A673 (cell line): ENCODE measurements at regions of chr4 and their contacts with region 1.

Region 1: DNA sequence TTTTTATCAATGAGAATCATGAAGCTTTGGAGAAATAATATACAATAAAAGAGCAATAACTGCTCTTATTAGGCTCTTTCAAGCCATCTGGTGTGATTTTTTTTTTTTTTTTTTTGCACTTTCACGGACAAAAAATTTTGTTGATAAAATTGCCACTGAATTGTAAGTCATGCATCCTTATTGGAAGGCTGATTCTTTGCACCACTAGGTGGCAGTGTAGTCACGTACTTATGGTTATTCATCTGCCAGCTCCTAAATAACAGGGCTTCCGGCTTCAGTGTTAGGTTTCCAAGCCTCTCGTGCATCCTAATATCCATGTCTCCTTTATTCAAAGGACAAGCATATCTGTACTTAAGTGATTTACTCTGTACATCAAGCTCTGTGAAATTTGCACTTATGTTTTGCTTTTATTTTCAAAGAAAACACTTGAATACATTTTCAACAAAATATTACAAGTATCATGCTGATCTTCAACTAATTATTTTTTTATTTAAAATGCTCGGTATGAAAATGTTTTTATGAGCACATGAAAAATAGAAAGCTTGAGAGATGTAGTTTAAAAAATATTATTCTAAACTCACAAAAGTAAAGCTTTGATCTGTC is 1578.3 kb upstream of the TENM3 start:
- DNase-seq: peak; percentile 95
- H3K4me3 ChIP-seq: no peak overlapping the region
- H3K27ac ChIP-seq: peak overlapping the region; percentile 39
- H3K4me1 ChIP-seq: peaks cover 28% of the 10 kb centered on the region
- H3K27me3 ChIP-seq: no peaks in the 10 kb centered on the region
- CTCF ChIP-seq: peak; percentile 84

Region 2: GRCh38 chr4:179867300-179867878 is 797.5 kb before region 1 on chr4:
- CTCF ChIA-PET with region 1: no interaction called
- POLR2A ChIA-PET with region 1: no interaction called
- intact Hi-C with region 1: loop called (anchors 2 kb)
- DNase-seq: peak; percentile 84
- H3K4me3 ChIP-seq: no peak overlapping the region
- H3K27ac ChIP-seq: no peak overlapping the region
- H3K4me1 ChIP-seq: no peaks in the 10 kb centered on the region
- H3K27me3 ChIP-seq: no peaks in the 10 kb centered on the region
- CTCF ChIP-seq: peak; percentile 94

Region 3: DNA sequence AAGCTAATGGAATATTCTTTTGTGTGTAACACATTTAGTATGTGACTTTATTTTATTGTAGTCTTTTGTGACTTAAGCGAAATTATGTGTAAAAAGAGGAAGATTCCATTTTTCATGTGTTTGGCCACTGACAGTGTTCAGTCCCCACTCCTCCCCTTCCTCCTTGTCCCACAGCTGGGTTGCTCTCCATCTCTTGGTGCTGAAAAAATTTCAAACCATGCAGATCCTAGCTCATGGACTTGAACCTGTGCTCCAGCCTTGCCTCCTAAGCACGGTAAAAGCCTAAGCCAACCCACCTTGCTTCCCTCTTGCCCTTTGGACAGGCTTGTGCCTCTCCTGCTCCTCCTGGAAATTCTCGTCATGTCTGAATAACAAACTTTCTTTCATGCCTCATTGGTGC is 430.1 kb before region 1 on chr4:
- CTCF ChIA-PET with region 1: interaction called, 3 read pairs
- POLR2A ChIA-PET with region 1: no interaction called
- intact Hi-C with region 1: loop called (anchors 5 kb)
- DNase-seq: peak; percentile 19
- H3K4me3 ChIP-seq: no peak overlapping the region
- H3K27ac ChIP-seq: no peak overlapping the region
- H3K4me1 ChIP-seq: no peaks in the 10 kb centered on the region
- H3K27me3 ChIP-seq: no peaks in the 10 kb centered on the region
- CTCF ChIP-seq: no peak

Region 4: DNA sequence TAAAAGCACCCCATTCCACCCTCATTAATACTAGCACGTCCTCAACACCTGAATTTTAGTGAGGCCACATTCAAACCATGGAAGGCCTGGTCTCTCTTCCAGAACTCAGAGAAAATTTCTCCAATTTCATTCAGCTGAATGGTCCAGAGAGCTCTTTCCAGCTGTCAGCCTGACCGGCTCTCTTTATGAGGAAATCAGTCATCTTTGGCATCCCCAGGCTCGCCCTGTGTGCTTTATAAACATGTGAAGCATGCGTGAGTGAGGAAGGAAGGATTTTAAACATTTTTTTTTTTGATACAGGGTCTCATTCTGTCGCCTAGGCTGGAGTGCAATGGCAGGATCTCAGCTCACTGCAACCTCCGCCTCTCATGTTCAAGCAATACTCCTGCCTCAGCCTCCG is 234.6 kb before region 1 on chr4:
- CTCF ChIA-PET with region 1: interaction called, 13 read pairs
- POLR2A ChIA-PET with region 1: no interaction called
- intact Hi-C with region 1: no loop called
- DNase-seq: no peak
- H3K4me3 ChIP-seq: no peak overlapping the region
- H3K27ac ChIP-seq: no peak overlapping the region
- H3K4me1 ChIP-seq: peaks cover 5% of the 10 kb centered on the region
- H3K27me3 ChIP-seq: no peaks in the 10 kb centered on the region
- CTCF ChIP-seq: no peak

Region 5: DNA sequence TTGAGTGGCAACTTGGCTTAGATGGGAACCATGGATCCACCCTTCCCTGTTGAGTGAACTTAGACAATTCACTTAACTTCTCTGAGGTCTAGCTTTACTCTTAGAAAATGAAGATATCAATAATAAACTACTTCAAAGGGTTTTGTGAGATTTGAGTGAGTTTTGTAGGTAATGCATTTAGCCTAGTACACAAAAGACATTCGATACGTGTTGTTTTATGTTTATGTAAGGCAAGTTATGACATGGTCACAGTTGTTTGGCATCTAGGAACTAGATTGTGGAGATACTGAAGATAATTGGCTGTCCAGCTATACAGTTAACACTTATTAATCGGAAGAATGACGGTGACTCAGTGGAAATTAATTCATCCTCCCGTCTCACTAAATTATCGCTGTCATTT is 202.8 kb before region 1 on chr4:
- CTCF ChIA-PET with region 1: interaction called, 10 read pairs
- POLR2A ChIA-PET with region 1: no interaction called
- intact Hi-C with region 1: no loop called
- DNase-seq: no peak
- H3K4me3 ChIP-seq: no peak overlapping the region
- H3K27ac ChIP-seq: no peak overlapping the region
- H3K4me1 ChIP-seq: no peaks in the 10 kb centered on the region
- H3K27me3 ChIP-seq: no peaks in the 10 kb centered on the region
- CTCF ChIP-seq: no peak

Region 6: GRCh38 chr4:180766944-180767729 is 102.3 kb after region 1 on chr4:
- CTCF ChIA-PET with region 1: interaction called, 10 read pairs
- POLR2A ChIA-PET with region 1: no interaction called
- intact Hi-C with region 1: no loop called
- DNase-seq: no peak
- H3K4me3 ChIP-seq: no peak overlapping the region
- H3K27ac ChIP-seq: no peak overlapping the region
- H3K4me1 ChIP-seq: no peaks in the 10 kb centered on the region
- H3K27me3 ChIP-seq: no peaks in the 10 kb centered on the region
- CTCF ChIP-seq: no peak

Region 7: GRCh38 chr4:180947425-180947824 is 282.6 kb after region 1 on chr4:
- CTCF ChIA-PET with region 1: no interaction called
- POLR2A ChIA-PET with region 1: no interaction called
- intact Hi-C with region 1: loop called (anchors 5 kb)
- DNase-seq: peak; percentile 63
- H3K4me3 ChIP-seq: no peak overlapping the region
- H3K27ac ChIP-seq: no peak overlapping the region
- H3K4me1 ChIP-seq: peaks cover 18% of the 10 kb centered on the region
- H3K27me3 ChIP-seq: no peaks in the 10 kb centered on the region
- CTCF ChIP-seq: peak; percentile 55; the same call in 1 of the 2 replicates